Activated CD4-positive, alpha-beta T cell treated with anti-CD3 and anti-CD28 coated beads, Interleukin-2, amount 10 ng/mL, durations not matched to agents 7 days and 5 days (primary cell): ENCODE measurements at regions of chr6 and their contacts with region 1.

Region 1: DNA sequence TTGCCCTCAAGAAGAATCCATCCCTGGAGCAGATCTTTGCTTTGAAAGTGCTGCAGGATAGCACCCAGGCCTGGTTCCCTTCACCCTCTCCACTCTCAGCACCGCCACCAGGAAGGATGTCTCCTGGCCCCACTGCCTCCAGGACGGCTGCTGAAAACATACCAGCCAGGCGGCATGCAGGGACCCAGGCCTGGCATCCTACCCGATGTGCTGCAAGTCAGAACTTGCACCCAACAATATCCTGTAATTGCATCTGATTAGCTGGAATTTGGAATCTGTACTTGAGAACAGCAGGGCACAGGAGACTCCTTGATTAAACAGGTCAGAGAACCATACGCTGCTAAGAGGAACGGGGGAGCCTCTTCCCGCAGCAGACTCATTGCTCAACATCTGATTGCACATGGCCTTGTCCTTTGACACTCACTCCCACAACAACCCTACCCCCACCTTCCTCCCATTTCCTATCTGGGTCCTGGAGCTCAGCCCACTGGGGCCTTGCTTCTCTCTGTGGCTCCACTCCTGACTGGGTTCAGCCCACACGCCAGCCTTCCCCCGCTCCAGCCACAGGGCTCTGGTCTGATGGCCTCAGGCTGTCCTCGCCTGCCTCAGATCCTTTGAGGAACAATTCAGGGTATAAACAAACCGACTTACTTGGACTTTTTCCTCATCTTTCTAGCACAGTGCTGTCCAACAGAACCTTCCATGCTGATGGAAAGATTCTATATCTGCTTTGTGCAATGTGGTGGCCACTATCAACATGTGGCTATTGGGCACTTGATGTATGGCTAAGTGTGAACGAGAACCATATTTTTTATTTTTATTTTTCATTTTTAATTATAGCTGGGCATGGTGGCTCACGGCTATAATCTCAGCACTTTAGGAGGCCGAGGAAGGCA is 78.0 kb downstream of the FGD2 start:
- DNase-seq: no peak
- H3K4me3 Mint-ChIP-seq: no peak overlapping the region
- H3K27ac Mint-ChIP-seq: peak overlapping the region; percentile 2
- H3K4me1 Mint-ChIP-seq: no peaks in the 10 kb centered on the region
- H3K27me3 Mint-ChIP-seq: no peaks in the 10 kb centered on the region

Region 2: DNA sequence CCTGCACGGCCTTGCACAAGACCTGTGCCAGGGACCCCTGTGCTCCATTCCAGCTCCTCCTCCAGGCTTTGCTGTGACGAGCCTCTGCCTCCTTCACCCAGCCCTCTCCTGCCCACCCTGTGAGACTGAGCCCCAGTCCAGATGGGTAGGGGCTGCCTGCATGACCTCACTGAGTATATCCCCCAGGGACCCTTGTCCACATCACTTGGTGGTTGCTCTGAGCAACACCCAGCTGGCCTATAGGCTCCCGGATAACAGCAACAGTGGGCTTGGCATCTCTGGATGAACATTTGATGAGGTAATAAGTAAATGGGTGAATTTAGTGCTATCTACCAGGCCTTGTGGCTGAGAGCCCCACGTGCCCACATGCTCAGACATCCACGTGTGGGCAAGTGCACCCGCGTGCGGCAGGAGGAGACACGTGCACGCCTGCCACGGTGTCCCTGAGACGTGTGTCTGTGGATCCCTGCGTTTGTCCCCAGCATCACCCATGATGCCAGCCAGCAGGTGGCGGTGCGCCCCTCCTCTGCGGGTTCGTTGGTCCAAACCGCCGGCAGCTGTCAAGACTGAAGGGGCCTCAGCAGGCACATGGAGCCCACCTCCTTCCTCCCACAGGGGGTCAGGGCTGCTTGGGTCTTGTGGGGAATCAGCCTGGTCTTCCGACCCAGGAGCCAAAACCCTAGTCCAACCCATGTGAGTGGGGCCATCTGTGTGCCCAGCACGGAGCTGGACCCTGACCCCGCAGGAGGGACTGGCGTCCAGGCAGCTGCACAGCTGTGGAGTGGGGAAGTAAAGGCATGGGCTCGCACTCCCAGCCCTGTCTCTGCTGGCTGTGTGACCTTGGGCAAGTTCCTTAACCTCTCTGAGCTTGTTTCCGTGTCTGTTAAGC is 32.1 kb before region 1 on chr6:
- CTCF ChIA-PET with region 1: interaction called, 11 read pairs
- POLR2A ChIA-PET with region 1: no interaction called
- DNase-seq: peak; percentile 91
- H3K4me3 Mint-ChIP-seq: peak overlapping the region; percentile 76
- H3K27ac Mint-ChIP-seq: peak overlapping the region; percentile 92
- H3K4me1 Mint-ChIP-seq: peaks cover 75% of the 10 kb centered on the region
- H3K27me3 Mint-ChIP-seq: no peaks in the 10 kb centered on the region

Region 3: GRCh38 chr6:37062424-37062823 is 21.1 kb before region 1 on chr6:
- CTCF ChIA-PET with region 1: no interaction called
- POLR2A ChIA-PET with region 1: no interaction called
- DNase-seq: no peak
- H3K4me3 Mint-ChIP-seq: no peak overlapping the region
- H3K27ac Mint-ChIP-seq: no peak overlapping the region
- H3K4me1 Mint-ChIP-seq: peaks cover 7% of the 10 kb centered on the region
- H3K27me3 Mint-ChIP-seq: no peaks in the 10 kb centered on the region

Region 4: GRCh38 chr6:38824243-38824894 is 1740.9 kb after region 1 on chr6:
- CTCF ChIA-PET with region 1: no interaction called
- POLR2A ChIA-PET with region 1: no interaction called
- DNase-seq: no peak
- H3K4me3 Mint-ChIP-seq: no peak overlapping the region
- H3K27ac Mint-ChIP-seq: no peak overlapping the region
- H3K4me1 Mint-ChIP-seq: no peaks in the 10 kb centered on the region
- H3K27me3 Mint-ChIP-seq: peaks cover 21% of the 10 kb centered on the region